T-cell (primary cell): ENCODE measurements at regions of chr17 and their contacts with region 1.

Region 1: DNA sequence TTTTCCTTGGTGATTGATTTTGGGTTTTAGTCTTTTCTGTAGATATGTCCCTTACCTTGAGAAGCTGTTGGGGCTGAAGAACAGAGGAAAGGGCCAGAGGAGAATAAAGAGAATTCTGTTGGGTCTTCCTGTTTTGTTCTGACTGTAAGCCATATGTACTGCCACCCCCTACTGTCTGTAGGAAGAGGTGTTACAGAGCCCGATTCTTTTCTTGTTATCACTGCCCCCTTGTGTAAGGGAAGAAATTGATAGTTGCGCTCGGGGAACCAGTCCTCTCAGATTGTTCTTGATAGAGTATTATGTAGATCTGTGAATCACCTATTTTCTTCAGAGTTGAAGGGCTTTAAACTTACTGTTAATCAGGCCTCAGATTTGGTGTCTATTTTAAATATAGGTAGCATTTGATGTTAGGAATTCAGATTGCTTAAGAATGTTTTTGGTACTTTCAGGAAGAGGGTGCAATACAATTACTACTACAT is 2.4 kb downstream of the TANC2 start:
- DNase-seq: peak in 32 of 35 experiments; percentile 14 to 83 (median 40)
- ATAC-seq: peak; percentile 32 to 49 (median 42)
- H3K4me3 ChIP-seq: no peak overlapping the region
- H3K4me3 Mint-ChIP-seq: peak overlapping the region; percentile 34 to 63 (median 51)
- H3K27ac ChIP-seq: no peak overlapping the region
- H3K27ac Mint-ChIP-seq: peak overlapping the region; percentile 59 to 64
- H3K4me1 ChIP-seq: peaks cover 18 to 19% of the 10 kb centered on the region in 2 experiments
- H3K4me1 Mint-ChIP-seq: peaks cover 34 to 42% (median 39%) of the 10 kb centered on the region in 3 donors
- H3K27me3 ChIP-seq: no peaks in the 10 kb centered on the region
- H3K27me3 Mint-ChIP-seq: no peaks in the 10 kb centered on the region

Region 2: DNA sequence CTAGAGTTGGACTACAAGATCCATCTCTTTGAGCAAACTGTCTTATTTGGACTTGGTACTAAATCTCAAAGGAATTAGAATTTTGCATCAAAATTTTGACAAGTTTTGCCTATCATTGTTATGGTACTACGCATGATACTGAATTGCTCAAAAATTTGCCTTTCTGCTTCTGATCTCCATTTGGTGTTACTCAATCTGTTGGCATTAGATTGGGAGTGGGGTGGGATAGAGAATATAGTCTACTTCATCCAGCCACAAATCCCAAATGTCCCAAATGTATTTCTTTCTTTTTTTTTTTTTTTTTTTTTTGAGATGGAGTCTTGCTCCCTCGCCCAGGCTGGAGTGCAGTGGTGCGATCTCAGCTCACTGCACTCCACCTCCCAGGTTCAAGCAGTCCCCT is 202.3 kb after region 1 on chr17:
- CTCF ChIA-PET with region 1: no interaction called
- POLR2A ChIA-PET with region 1: interaction called in 1 of 2 experiments, 11 read pairs
- DNase-seq: no peak
- ATAC-seq: no peak
- H3K4me3 ChIP-seq: no peak overlapping the region
- H3K4me3 Mint-ChIP-seq: no peak overlapping the region
- H3K27ac ChIP-seq: no peak overlapping the region
- H3K27ac Mint-ChIP-seq: no peak overlapping the region
- H3K4me1 ChIP-seq: no peaks in the 10 kb centered on the region
- H3K4me1 Mint-ChIP-seq: no peaks in the 10 kb centered on the region
- H3K27me3 ChIP-seq: no peaks in the 10 kb centered on the region
- H3K27me3 Mint-ChIP-seq: no peaks in the 10 kb centered on the region